Dendritic cell treated with granulocyte-macrophage colony-stimulating factor and Interleukin-4, amounts not matched to agents 40 ng/mL and 50 ng/mL, for 4 days (primary cell): ENCODE measurements at regions of chr6 and their contacts with region 1.

Region 1: GRCh38 chr6:166382933-166383801 is at the start of gene MPC1:
- H3K4me3 Mint-ChIP-seq: peak within 1 kb of the TSS; percentile 96
- H3K27ac Mint-ChIP-seq: peak within 1 kb of the TSS; percentile 92
- H3K4me1 Mint-ChIP-seq: peaks cover 11% of the 10 kb centered on the region
- H3K27me3 Mint-ChIP-seq: no peaks in the 10 kb centered on the region

Region 2: GRCh38 chr6:166342349-166343149 is 40.6 kb before region 1 on chr6 and contains the start of gene SFT2D1:
- intact Hi-C with region 1: loop called (anchors 1 kb)
- H3K4me3 Mint-ChIP-seq: peak within 1 kb of the TSS; percentile 92
- H3K27ac Mint-ChIP-seq: peak within 1 kb of the TSS; percentile 94
- H3K4me1 Mint-ChIP-seq: peaks cover 27% of the 10 kb centered on the region
- H3K27me3 Mint-ChIP-seq: no peaks in the 10 kb centered on the region